ENCODE measurements at regions of chr19 and their contacts with region 1.

Region 1: GRCh38 chr19:34540811-34541557 is 59.4 kb downstream of the WTIP start:
- DNase-seq: no peak
- H3K4me3 ChIP-seq: no peak overlapping the region
- H3K27ac ChIP-seq: no peak overlapping the region
- H3K4me1 ChIP-seq: no peaks in the 10 kb centered on the region
- H3K27me3 ChIP-seq: no peaks in the 10 kb centered on the region
- CTCF ChIP-seq: no peak
- EP300 ChIP-seq: no peak
- POLR2A ChIP-seq: no peak

Region 2: DNA sequence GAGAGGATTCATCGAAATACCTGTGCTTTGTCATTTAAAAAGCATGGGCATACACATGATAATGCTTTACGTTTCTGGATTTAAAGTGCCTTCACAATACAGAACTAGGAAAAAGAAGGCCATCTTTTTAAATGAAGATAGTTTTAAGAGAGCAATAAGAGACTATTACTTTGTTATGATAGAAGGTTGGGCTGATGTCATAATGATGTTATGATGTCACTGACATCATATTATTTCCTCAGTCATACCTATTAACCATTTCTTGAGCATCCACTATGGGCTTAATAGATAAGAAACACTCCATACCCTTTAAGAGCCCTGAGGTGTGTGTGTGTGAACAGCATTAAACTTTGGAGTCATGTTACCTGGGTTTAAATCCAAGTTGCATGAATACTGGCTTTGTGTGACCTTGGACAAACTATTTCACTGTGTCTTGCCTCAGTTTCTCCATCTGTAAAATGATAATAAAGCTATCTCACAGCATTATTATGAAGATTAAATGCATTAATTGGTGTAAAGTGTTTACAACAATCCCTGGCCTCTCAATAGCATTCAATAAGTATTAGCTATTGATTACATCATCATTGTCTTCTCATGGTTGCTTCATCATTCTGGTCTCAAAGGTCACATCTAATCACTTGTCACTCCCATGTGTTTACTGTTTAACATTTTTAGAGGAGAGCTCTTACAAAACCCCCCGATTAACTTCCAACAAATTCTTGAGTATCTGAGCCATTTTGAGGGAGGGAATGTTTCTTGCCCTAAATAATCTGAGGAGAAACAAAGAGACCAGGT is 204.1 kb after region 1 on chr19:
- intact Hi-C with region 1: loop called in 1 of 4 experiments (anchors 2 kb)
- DNase-seq: no peak
- H3K4me3 ChIP-seq: no peak overlapping the region
- H3K27ac ChIP-seq: no peak overlapping the region
- H3K4me1 ChIP-seq: no peaks in the 10 kb centered on the region
- H3K27me3 ChIP-seq: no peaks in the 10 kb centered on the region
- CTCF ChIP-seq: no peak
- EP300 ChIP-seq: no peak
- POLR2A ChIP-seq: no peak